A673 (cell line): ENCODE measurements at regions of chr15 and their contacts with region 1.

Region 1: GRCh38 chr15:78325092-78325843 is 14.9 kb upstream of the CRABP1 start:
- DNase-seq: no peak
- H3K4me3 ChIP-seq: no peak overlapping the region
- H3K27ac ChIP-seq: no peak overlapping the region
- H3K4me1 ChIP-seq: peaks cover 22% of the 10 kb centered on the region
- H3K27me3 ChIP-seq: no peaks in the 10 kb centered on the region
- CTCF ChIP-seq: no peak

Region 2: DNA sequence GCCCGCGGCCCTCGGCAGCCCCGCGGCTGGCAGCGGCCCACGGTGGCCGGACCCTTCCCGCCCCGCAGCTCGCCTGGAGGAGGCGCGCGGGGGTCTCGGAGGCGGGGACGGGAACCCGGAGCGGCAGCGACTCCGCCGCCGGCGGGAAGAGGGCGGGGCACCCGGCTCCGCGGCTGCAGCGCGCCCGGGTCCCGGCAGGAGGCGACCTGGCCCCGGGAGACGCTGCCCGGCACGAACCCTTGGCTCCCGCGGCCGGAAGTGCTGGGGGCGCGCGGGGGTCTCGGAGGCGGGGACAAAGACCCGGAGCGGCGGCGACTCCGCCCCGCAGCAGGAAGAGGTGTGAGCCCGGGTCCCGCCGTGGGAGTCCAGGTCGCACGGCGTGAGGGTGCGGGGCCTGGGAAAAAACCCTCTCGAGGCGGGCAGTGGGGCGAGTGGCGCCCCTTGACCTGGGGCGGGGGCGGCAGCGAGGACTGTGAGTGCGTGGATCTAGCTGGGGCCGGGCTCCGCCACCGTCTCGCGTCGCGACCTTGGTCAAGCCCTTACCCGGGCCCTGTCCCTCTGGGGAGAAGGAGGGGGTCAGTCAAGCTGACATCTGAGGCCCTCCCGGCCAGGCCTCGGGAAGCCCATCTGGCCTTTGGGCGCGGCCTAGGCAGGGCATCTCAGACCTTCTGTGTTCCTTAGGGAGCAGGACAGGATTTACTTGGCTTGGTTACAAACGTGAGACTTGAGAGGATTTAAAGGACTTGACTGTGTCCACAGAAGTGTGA is 193.8 kb before region 1 on chr15 and contains the start of gene CIB2:
- CTCF ChIA-PET with region 1: no interaction called
- POLR2A ChIA-PET with region 1: no interaction called
- intact Hi-C with region 1: no loop called
- DNase-seq: peak; percentile 76
- H3K4me3 ChIP-seq: peak within 1 kb of the TSS; percentile 65
- H3K27ac ChIP-seq: peak within 1 kb of the TSS; percentile 60
- H3K4me1 ChIP-seq: peaks cover 8% of the 10 kb centered on the region
- H3K27me3 ChIP-seq: no peaks in the 10 kb centered on the region
- CTCF ChIP-seq: peak; percentile 47; the same call in 1 of the 2 replicates
- total RNA-seq, gene CIB2: 1.7 and 2.1 TPM in 2 replicates

Region 3: GRCh38 chr15:78170848-78171773 is 154.2 kb before region 1 on chr15:
- CTCF ChIA-PET with region 1: no interaction called
- POLR2A ChIA-PET with region 1: no interaction called
- intact Hi-C with region 1: no loop called
- DNase-seq: no peak
- H3K4me3 ChIP-seq: no peak overlapping the region
- H3K27ac ChIP-seq: no peak overlapping the region
- H3K4me1 ChIP-seq: no peaks in the 10 kb centered on the region
- H3K27me3 ChIP-seq: no peaks in the 10 kb centered on the region
- CTCF ChIP-seq: no peak

Region 4: DNA sequence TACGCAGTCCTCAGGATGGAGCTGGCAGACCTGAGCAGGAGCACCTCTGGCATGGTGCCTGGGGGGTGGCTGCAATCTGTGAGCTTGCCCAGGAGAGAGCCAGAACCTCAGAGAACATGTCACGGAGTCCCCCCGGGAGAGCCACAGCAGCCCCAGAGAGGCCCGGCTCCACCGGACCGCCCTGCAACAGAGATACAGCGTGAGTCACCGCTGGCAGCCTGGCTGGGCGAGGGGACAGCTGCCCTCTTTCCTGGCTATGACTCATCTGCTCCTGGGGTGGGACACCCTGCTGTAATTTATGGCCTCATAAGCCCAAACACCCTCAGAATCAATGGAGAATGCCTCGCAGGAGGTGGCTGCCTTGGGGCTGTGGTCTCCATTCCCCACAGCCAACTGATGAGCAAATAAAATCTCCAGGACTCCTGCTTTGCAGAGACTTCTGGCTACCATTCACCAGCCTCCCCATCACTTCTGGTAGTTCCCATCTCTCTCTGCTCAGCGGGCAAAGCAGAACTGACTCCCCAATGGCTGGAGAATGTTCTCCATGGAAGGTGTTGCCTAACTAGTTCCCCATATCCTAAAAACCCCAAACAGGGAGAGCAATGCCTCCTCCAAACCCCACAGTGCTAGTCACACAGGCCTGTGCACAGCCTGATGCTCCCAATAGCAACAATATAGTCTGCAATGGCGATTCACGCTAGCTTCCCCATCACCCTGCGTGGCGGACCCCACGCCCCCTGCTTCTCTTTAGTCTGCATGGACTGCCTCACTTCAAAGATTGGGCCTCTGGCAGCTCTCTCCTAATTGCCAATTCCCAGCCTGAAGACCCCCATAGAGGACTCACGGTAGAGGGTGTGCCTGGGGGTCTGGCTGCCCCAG is 112.5 kb before region 1 on chr15:
- CTCF ChIA-PET with region 1: no interaction called
- POLR2A ChIA-PET with region 1: interaction called, 22 read pairs
- intact Hi-C with region 1: no loop called
- DNase-seq: peak; percentile 81
- H3K4me3 ChIP-seq: no peak overlapping the region
- H3K27ac ChIP-seq: no peak overlapping the region
- H3K4me1 ChIP-seq: no peaks in the 10 kb centered on the region
- H3K27me3 ChIP-seq: no peaks in the 10 kb centered on the region
- CTCF ChIP-seq: no peak

Region 5: DNA sequence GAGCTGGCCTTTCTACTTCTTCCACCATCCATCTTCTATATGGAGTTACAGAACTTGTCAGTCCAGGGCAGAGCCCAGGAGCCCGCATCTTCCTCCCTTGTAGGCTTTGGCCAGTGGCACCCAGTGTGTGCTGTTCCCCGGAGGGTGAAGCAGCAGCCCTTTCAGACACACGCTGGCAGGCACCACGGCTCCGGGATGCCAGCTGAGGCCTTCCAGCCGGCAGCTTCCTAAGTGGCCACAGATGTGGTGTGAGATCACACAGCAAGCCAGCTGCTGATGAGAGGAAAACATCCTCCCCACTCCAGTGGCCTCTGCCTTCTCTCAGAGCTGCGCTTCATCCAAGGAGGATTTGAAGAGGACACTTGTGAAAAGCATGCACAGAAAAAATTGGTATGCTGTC is 39.0 kb after region 1 on chr15:
- CTCF ChIA-PET with region 1: no interaction called
- POLR2A ChIA-PET with region 1: no interaction called
- intact Hi-C with region 1: no loop called
- DNase-seq: peak; percentile 72
- H3K4me3 ChIP-seq: no peak overlapping the region
- H3K27ac ChIP-seq: no peak overlapping the region
- H3K4me1 ChIP-seq: peaks cover 14% of the 10 kb centered on the region
- H3K27me3 ChIP-seq: no peaks in the 10 kb centered on the region
- CTCF ChIP-seq: no peak

Region 6: GRCh38 chr15:78944669-78945407 is 619.6 kb after region 1 on chr15 and contains the start of gene CTSH:
- CTCF ChIA-PET with region 1: no interaction called
- POLR2A ChIA-PET with region 1: no interaction called
- intact Hi-C with region 1: no loop called
- DNase-seq: peak; percentile 56
- H3K4me3 ChIP-seq: peak within 1 kb of the TSS; percentile 44
- H3K27ac ChIP-seq: no peak within 1 kb of the TSS
- H3K4me1 ChIP-seq: no peaks in the 10 kb centered on the region
- H3K27me3 ChIP-seq: no peaks in the 10 kb centered on the region
- CTCF ChIP-seq: no peak
- total RNA-seq, gene CTSH: 2.2 and 3.6 TPM in 2 replicates